T-cell (primary cell): ENCODE measurements at regions of chr15 and their contacts with region 1.

Region 1: GRCh38 chr15:41284427-41285177 is 47.8 kb downstream of the OIP5 start:
- DNase-seq: peak in 1 of 35 experiments; percentile 37
- ATAC-seq: no peak
- H3K4me3 ChIP-seq: peak overlapping the region; percentile 79 to 94
- H3K4me3 Mint-ChIP-seq: peak overlapping the region; percentile 98 to 99 (median 99)
- H3K27ac ChIP-seq: peak overlapping the region; percentile 82
- H3K27ac Mint-ChIP-seq: peak overlapping the region; percentile 96 to 98
- H3K4me1 ChIP-seq: peaks cover 6 to 31% of the 10 kb centered on the region in 2 experiments
- H3K4me1 Mint-ChIP-seq: peaks cover 50 to 53% (median 53%) of the 10 kb centered on the region in 3 donors
- H3K27me3 ChIP-seq: no peaks in the 10 kb centered on the region
- H3K27me3 Mint-ChIP-seq: no peaks in the 10 kb centered on the region

Region 2: GRCh38 chr15:41331833-41332787 is 47.5 kb after region 1 on chr15 and contains the start of gene OIP5:
- CTCF ChIA-PET with region 1: interaction called in 1 of 2 experiments, 17 read pairs
- POLR2A ChIA-PET with region 1: no interaction called
- DNase-seq: peak; percentile 93 to 99 (median 98)
- ATAC-seq: peak; percentile 96 to 97 (median 97)
- H3K4me3 ChIP-seq: peak within 1 kb of the TSS; percentile 70 to 97
- H3K4me3 Mint-ChIP-seq: peak within 1 kb of the TSS; percentile 90 to 99 (median 97)
- H3K27ac ChIP-seq: peak within 1 kb of the TSS; percentile 50
- H3K27ac Mint-ChIP-seq: peak within 1 kb of the TSS; percentile 76 to 94
- H3K4me1 ChIP-seq: peaks cover 8 to 9% of the 10 kb centered on the region in 2 experiments
- H3K4me1 Mint-ChIP-seq: peaks cover 23 to 36% (median 26%) of the 10 kb centered on the region in 3 donors
- H3K27me3 ChIP-seq: no peaks in the 10 kb centered on the region
- H3K27me3 Mint-ChIP-seq: no peaks in the 10 kb centered on the region
- total RNA-seq, gene OIP5: 0.58 to 0.82 (median 0.70) TPM in 3 of 5 donors, not detected in the others